Calu3 (cell line): ENCODE measurements at regions of chr2 and their contacts with region 1.

Region 1: DNA sequence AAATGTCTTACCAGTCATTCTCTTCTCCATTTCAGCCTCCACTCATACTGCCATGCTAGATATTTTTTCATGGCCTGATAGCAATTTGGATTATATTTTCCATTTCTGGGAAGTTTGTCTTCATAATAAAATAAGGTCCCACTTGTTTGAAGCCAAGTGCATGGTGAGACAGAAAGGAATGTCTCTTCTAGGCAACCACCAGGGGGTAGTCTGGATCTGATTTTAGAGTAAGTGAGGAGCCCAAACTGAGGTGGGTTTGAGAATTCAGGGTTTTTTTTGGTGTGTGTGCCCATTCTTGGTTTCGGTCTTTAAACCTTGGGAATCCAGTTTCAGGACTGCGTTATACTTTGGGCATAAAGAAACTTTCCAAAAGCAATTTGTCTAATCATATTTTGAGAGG is 315.5 kb downstream of the RPRM start:
- DNase-seq: peak; percentile 67
- H3K4me3 Mint-ChIP-seq: no peak overlapping the region
- H3K27ac Mint-ChIP-seq: no peak overlapping the region
- H3K4me1 Mint-ChIP-seq: peaks cover 13% of the 10 kb centered on the region
- H3K27me3 Mint-ChIP-seq: no peaks in the 10 kb centered on the region
- CTCF ChIP-seq: peak; percentile 57

Region 2: DNA sequence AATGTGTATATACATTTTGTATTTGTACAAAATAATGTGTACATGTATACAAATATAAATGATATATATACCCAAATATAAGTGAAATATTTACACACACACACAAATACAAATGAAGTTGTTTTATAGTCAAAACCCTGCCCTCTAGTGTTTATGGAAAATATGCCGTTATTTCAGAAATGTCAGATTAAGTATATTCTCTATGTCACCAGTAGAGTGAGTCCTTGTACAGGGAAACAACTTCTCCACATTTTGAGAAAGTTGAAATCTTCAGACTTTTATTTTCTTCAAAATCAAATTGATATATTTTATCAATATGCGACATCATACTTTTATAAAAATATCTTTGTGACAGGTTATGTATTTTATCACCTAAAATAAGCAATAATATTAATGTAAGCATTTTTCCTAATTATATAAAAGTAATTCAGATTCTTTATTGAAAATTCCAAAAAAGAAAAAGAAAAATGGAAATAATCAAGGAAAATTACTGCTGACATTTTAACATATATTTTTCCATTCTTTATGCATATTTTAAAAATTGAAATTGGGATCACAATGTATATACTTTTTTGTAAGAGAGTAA is 422.2 kb before region 1 on chr2:
- CTCF ChIA-PET with region 1: no interaction called
- intact Hi-C with region 1: loop called (anchors 10 kb)
- DNase-seq: no peak
- H3K4me3 Mint-ChIP-seq: no peak overlapping the region
- H3K27ac Mint-ChIP-seq: no peak overlapping the region
- H3K4me1 Mint-ChIP-seq: no peaks in the 10 kb centered on the region
- H3K27me3 Mint-ChIP-seq: no peaks in the 10 kb centered on the region
- CTCF ChIP-seq: peak; percentile 74

Region 3: DNA sequence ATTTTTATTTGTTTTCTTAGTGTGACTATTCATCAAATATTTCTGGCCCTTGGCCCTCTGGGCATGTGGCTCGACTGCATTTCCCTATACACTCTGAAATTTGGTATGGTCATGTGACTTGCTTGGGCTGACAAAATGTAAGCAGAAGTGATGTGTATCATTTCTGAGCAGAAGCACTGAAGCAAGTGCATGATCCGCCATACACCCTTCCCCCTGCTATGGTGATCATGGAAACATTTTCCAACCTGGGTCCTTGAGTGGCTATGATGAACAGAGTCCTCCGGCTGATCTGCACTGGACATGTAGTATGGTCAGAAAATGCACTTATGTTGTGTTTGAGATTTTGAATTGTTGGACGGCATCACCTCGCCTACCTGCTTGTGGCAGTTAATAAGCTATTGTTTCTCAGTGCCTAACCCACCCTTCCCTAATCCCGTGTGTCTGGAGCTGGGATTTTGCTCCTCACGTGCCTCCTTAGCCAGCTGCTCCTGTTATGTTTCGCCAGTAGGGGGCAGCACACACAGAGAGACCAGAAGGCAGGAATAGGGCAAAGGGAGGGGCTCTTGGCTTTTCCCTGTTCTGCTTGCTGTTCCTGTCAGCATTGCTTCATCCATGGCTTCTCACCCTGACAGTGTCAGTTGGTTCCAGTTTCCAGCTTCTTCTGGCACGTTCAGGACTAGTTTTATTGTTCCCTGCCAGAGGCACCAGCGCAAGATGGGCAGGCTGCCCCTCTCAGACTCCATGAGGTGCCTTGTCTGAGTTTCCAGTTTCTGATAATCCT is 237.3 kb before region 1 on chr2:
- CTCF ChIA-PET with region 1: no interaction called
- intact Hi-C with region 1: loop called (anchors 2 kb)
- DNase-seq: peak; percentile 80
- H3K4me3 Mint-ChIP-seq: no peak overlapping the region
- H3K27ac Mint-ChIP-seq: no peak overlapping the region
- H3K4me1 Mint-ChIP-seq: no peaks in the 10 kb centered on the region
- H3K27me3 Mint-ChIP-seq: peaks cover 24% of the 10 kb centered on the region
- CTCF ChIP-seq: peak; percentile 83

Region 4: DNA sequence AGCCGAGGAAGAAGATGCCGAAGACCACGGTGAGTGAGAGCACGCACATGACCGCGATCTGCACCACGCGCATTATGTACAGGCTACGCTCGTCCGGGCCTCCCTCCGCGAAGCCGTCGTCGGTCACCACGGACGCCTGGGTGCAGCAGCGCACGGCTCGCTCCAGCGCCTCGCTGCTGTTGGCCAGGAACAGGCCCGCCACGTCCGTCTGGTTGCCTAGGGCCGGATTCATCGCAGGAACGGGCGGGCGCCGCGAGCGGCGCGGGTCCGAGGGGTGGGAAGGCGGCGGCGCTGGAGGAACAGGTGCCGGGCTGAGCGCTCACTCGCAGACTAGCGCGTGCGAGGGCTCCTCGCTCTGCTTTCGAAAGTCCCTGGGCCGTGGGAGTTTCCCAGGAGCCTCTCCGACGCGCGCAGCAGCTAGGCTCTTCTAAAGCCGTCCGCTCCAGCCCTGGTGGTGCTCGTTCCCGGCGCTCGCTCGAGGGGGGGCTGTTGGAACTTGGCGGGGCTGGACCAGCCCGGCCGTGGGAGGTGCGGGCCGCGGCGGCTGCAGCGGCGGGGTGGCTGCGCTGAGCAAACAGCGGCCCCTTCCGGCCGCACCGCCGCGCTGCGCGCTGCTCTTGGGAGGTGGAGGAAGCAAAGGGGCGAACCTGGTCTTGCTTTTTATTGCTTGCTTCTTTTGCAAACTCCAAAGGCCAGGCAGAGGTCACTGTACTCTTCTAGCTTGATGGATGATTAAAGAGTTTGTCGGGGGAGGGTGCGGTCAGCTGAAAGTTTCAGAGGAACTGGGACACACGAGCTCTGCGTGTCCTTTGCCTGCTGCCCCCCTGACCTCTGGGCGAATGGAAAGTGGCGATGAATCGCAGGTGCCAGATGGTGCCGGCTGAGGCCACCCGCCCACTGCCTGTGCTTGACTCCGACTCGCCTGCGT is 315.5 kb after region 1 on chr2 and contains the start of gene RPRM:
- CTCF ChIA-PET with region 1: no interaction called
- intact Hi-C with region 1: loop called (anchors 1 kb)
- DNase-seq: peak; percentile 82
- H3K4me3 Mint-ChIP-seq: peak within 1 kb of the TSS; percentile 46
- H3K27ac Mint-ChIP-seq: peak within 1 kb of the TSS; percentile 3
- H3K4me1 Mint-ChIP-seq: peaks cover 8% of the 10 kb centered on the region
- H3K27me3 Mint-ChIP-seq: no peaks in the 10 kb centered on the region
- CTCF ChIP-seq: peak; percentile 93
- total RNA-seq, gene RPRM: 1.0 and 2.1 TPM in 2 replicates

Region 5: GRCh38 chr2:153519257-153519875 is 356.3 kb after region 1 on chr2:
- CTCF ChIA-PET with region 1: no interaction called
- intact Hi-C with region 1: loop called (anchors 1 kb)
- DNase-seq: peak; percentile 54
- H3K4me3 Mint-ChIP-seq: no peak overlapping the region
- H3K27ac Mint-ChIP-seq: no peak overlapping the region
- H3K4me1 Mint-ChIP-seq: no peaks in the 10 kb centered on the region
- H3K27me3 Mint-ChIP-seq: no peaks in the 10 kb centered on the region
- CTCF ChIP-seq: peak; percentile 62

Region 6: DNA sequence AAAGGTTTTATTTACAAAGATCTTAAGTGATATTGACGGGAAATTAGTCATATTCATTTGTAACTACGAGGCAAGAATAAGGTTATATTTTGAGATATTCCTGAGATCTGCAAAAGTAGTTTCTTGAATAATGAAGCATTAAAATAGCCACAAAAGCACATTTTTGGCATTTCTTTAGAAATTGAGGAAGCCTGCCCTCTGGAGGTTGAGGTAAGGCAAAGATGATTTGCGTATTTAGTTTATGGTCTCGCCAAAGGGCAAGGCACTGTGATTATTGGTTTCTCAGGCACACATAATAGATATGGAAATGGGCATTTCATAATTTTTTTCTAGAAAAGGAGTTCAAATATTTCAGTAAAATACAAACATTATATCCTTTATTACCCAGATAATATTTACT is 459.2 kb after region 1 on chr2:
- CTCF ChIA-PET with region 1: no interaction called
- intact Hi-C with region 1: loop called (anchors 5 kb)
- DNase-seq: peak; percentile 5
- H3K4me3 Mint-ChIP-seq: no peak overlapping the region
- H3K27ac Mint-ChIP-seq: no peak overlapping the region
- H3K4me1 Mint-ChIP-seq: no peaks in the 10 kb centered on the region
- H3K27me3 Mint-ChIP-seq: no peaks in the 10 kb centered on the region
- CTCF ChIP-seq: no peak